Activated naive CD4-positive, alpha-beta T cell treated with anti-CD3 and anti-CD28 coated beads for 36 hours (primary cell): ENCODE measurements at regions of chr16 and their contacts with region 1.

Region 1: GRCh38 chr16:51762081-51762996 is 611.3 kb upstream of the SALL1 start:
- DNase-seq: peak; percentile 68
- H3K4me3 Mint-ChIP-seq: no peak overlapping the region
- H3K27ac Mint-ChIP-seq: no peak overlapping the region
- H3K4me1 Mint-ChIP-seq: peaks cover 2% of the 10 kb centered on the region
- H3K27me3 Mint-ChIP-seq: peaks cover 5% of the 10 kb centered on the region

Region 2: GRCh38 chr16:50814541-50814940 is 947.8 kb before region 1 on chr16:
- CTCF ChIA-PET with region 1: no interaction called
- intact Hi-C with region 1: loop called (anchors 5 kb)
- DNase-seq: no peak
- H3K4me3 Mint-ChIP-seq: no peak overlapping the region
- H3K27ac Mint-ChIP-seq: no peak overlapping the region
- H3K4me1 Mint-ChIP-seq: no peaks in the 10 kb centered on the region
- H3K27me3 Mint-ChIP-seq: no peaks in the 10 kb centered on the region

Region 3: DNA sequence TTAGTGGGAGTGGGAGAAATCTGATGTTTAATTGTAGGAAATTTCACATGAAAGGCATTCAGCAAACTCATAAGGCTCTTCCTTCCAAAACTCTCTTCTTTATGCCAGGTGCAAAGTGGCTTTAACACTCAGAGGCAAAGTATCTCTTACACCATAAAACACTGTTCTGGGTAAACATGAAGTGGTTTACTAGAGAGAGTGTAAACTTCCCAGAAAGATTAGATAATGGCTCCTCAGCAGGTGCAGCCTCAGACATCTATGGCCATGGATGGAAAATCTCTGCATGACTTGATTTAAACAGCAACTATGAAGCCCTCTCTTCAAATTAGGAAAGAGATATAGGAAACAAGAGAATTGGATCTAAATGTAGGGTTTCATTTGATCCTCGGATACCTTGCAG is 28.1 kb before region 1 on chr16:
- CTCF ChIA-PET with region 1: no interaction called
- intact Hi-C with region 1: no loop called
- DNase-seq: no peak
- H3K4me3 Mint-ChIP-seq: no peak overlapping the region
- H3K27ac Mint-ChIP-seq: no peak overlapping the region
- H3K4me1 Mint-ChIP-seq: no peaks in the 10 kb centered on the region
- H3K27me3 Mint-ChIP-seq: no peaks in the 10 kb centered on the region

Region 4: DNA sequence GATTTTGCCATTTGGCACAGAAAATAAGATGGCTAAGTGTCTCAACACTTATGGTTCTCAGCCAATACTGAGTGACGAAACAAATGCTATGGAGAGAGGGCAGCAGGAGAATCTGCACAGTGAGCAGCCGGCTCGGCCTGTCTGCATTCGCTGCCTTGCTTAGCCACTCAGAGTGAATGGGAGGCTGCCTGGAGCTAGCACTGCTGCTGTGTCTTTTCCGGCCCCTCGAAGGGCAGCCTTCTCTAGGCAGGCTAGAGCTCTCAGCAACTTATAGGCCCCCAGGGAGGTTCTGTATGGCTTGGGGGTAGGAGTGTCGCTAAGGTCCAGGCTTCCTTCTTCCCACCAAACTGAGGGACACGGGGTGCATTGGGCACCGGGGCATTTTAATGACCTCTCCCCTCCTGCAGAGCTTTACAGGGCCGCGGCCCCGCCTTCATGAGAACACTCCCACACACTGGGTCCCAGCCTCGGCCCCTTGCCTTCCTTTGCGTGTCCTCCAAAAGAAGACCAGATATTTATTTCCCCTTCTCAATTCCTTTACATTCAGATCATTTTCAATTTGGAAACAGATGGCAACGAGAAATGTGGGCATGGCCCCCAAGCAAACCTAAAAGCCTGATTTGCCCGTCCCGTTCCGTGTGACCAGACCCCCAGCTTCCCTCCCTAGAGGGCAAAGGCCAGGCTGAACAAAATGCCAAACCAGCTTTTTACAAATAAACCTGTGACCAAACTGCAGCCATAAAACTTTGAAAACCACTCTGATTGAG is 113.7 kb after region 1 on chr16:
- CTCF ChIA-PET with region 1: no interaction called
- intact Hi-C with region 1: no loop called
- DNase-seq: no peak
- H3K4me3 Mint-ChIP-seq: no peak overlapping the region
- H3K27ac Mint-ChIP-seq: no peak overlapping the region
- H3K4me1 Mint-ChIP-seq: no peaks in the 10 kb centered on the region
- H3K27me3 Mint-ChIP-seq: no peaks in the 10 kb centered on the region